Activated CD4-positive, alpha-beta T cell treated with anti-CD3 and anti-CD28 coated beads for 36 hours (primary cell): ENCODE measurements at regions of chr20 and their contacts with region 1.

Region 1: DNA sequence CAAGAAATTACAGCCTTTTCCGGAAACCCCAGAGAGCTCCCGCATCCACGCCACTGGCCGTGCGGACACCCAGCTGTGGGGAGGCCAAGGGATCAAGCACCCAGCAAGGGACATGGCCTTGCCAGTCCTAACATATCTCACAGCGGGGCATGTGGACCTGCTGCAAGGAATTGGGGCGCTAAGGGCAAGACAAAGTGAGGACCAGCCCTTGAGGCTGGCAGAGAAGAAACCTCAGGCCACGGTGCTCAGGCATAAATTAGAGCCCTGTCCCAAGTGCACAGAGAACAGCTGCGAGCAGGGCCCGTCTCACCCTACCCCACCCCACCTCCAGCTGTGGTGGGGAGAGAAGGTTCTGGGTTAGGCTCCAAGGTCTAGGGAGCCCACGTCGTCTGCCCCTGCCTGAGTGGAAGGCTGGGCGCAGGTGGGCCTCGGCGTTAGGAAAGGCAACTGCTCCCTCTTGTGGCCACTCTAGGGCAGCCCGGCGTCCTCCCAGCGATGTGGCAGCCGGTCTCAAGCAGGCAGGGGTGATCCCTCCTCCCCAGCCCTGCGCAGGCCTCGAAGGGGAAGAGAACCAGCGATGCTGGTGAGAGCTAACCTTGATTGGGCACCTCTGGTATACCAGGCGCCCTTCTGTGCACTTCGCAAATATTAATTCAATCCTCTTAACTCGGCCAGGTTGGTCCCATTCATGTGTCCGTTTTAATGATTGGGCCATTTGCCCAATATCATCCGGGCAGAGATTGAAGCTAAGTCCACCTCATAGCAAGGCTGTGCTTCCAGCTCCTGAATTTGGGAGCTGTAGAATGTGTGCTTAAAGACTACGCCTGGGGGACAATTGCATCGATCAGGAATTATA is 235.8 kb downstream of the NFATC2 start:
- DNase-seq: peak; percentile 88
- ATAC-seq: peak; percentile 99
- H3K4me3 Mint-ChIP-seq: no peak overlapping the region
- H3K27ac Mint-ChIP-seq: no peak overlapping the region
- H3K4me1 Mint-ChIP-seq: no peaks in the 10 kb centered on the region
- H3K27me3 Mint-ChIP-seq: peaks cover 10% of the 10 kb centered on the region

Region 2: DNA sequence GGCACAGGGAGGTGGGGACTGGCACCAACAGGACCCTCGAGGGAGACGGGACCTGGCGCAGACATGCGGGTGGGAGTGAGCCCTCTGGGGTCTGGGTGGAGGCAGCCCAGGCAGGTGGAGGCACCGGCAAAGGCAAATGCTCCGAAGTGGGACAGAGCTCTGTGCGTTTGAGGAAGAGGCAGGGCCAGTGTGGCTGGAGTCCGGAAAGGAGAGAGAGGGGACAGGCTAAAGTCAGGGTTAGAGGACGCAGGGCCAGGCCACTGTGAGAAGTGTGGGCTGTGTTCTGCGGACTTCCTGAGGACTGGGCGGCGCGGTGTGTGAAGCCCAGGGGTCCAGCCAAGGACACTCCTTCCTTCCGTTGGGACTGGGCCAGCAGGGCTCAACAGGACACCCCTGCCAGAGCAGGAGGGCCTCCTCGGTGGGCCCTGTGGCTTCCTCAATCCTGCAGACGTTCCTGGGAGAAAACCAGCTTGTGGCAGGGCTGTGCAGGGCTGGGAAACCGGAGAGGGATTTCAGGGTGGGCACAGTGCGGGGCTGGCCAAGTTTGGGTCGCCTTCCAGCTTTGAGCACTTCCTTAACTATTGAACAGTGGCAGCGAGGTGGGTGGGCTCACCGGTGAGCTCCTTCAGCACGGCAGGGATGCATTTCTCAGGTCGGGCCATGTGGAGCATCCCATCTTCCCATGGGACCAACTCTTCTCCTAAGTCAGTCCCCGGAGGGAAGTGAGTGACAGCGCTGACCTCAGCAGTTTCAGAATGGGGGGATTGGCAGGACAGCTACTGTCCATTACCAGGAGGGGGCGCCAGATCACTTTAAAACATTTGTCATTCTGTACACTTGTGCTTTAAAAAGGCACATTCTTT is 325.6 kb before region 1 on chr20:
- CTCF ChIA-PET with region 1: interaction called, 23 read pairs
- POLR2A ChIA-PET with region 1: no interaction called
- intact Hi-C with region 1: no loop called
- DNase-seq: peak; percentile 84
- ATAC-seq: no peak
- H3K4me3 Mint-ChIP-seq: no peak overlapping the region
- H3K27ac Mint-ChIP-seq: peak overlapping the region; percentile 90
- H3K4me1 Mint-ChIP-seq: peaks cover 20% of the 10 kb centered on the region
- H3K27me3 Mint-ChIP-seq: peaks cover 26% of the 10 kb centered on the region

Region 3: GRCh38 chr20:50987592-50988210 is 319.0 kb before region 1 on chr20:
- CTCF ChIA-PET with region 1: interaction called, 210 read pairs
- POLR2A ChIA-PET with region 1: interaction called, 4 read pairs
- intact Hi-C with region 1: loop called (anchors 1 kb)
- DNase-seq: peak; percentile 71
- ATAC-seq: peak; percentile 89
- H3K4me3 Mint-ChIP-seq: no peak overlapping the region
- H3K27ac Mint-ChIP-seq: no peak overlapping the region
- H3K4me1 Mint-ChIP-seq: no peaks in the 10 kb centered on the region
- H3K27me3 Mint-ChIP-seq: peaks cover 23% of the 10 kb centered on the region

Region 4: DNA sequence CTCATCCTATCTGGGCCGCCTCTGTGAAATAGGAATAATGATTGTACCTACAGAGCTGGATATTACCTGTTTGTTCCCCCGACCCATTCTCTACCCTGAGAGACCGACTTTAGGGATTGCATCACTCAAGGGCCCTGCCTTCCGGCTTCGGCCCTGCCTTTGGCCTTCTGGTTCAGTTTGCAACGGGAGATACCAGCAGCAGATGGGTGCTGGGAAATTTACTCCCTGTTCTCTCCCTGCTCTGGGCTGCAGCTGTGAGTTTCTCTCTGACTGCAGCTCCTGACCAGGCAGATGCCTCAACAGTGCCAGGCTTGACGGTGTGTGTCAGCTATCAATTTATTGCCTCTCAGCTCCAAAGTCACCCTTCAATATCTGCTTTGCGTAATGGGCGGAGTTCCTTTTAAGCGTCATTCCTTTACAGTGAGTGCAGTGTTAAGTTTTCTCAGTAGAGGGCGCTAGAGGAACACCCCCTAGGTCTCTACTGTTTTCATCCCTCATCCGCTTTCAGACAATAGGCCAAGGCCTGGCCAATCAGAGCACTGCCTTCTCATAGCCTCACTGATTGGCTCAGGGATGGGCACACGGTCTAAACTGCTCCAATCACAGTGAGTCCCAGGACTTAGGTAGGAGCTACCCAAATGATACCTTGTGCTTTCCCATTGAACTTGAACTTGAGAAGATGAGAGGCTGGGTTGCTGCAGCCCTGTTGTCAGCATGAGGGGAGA is 313.8 kb before region 1 on chr20:
- CTCF ChIA-PET with region 1: interaction called, 210 read pairs
- POLR2A ChIA-PET with region 1: interaction called, 4 read pairs
- intact Hi-C with region 1: loop called (anchors 1 kb)
- DNase-seq: peak; percentile 78
- ATAC-seq: peak; percentile 100
- H3K4me3 Mint-ChIP-seq: no peak overlapping the region
- H3K27ac Mint-ChIP-seq: no peak overlapping the region
- H3K4me1 Mint-ChIP-seq: no peaks in the 10 kb centered on the region
- H3K27me3 Mint-ChIP-seq: peaks cover 4% of the 10 kb centered on the region

Region 5: GRCh38 chr20:51014797-51015722 is 291.7 kb before region 1 on chr20:
- CTCF ChIA-PET with region 1: interaction called, 12 read pairs
- POLR2A ChIA-PET with region 1: no interaction called
- intact Hi-C with region 1: no loop called
- DNase-seq: peak; percentile 64
- ATAC-seq: peak; percentile 49
- H3K4me3 Mint-ChIP-seq: no peak overlapping the region
- H3K27ac Mint-ChIP-seq: no peak overlapping the region
- H3K4me1 Mint-ChIP-seq: peaks cover 3% of the 10 kb centered on the region
- H3K27me3 Mint-ChIP-seq: peaks cover 18% of the 10 kb centered on the region

Region 6: DNA sequence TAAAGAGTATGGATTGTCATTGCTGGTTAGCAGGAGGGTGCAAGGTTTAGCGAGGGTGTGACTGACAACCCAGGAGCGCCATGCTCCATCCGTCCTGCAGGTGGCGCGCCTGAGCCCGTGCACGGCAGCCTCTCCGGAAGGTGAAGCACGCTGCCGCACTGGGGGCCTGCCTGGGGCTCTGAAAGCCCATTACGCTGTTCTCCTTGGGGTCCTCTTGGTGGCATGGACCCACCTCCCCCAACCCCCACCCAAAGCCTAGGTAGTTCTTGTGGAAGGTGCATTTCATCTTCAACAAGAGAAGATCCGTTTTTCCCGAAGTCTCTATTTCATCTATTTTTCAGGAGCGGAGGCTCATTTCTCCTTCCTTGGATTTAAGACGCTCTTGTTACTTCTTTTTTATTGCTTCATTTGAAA is 86.4 kb before region 1 on chr20:
- CTCF ChIA-PET with region 1: interaction called, 21 read pairs
- POLR2A ChIA-PET with region 1: no interaction called
- intact Hi-C with region 1: loop called (anchors 1 kb)
- DNase-seq: peak; percentile 83
- ATAC-seq: peak; percentile 87
- H3K4me3 Mint-ChIP-seq: no peak overlapping the region
- H3K27ac Mint-ChIP-seq: no peak overlapping the region
- H3K4me1 Mint-ChIP-seq: peaks cover 10% of the 10 kb centered on the region
- H3K27me3 Mint-ChIP-seq: peaks cover 58% of the 10 kb centered on the region

Region 7: GRCh38 chr20:51326201-51326819 is 19.6 kb after region 1 on chr20:
- CTCF ChIA-PET with region 1: interaction called, 14 read pairs
- POLR2A ChIA-PET with region 1: no interaction called
- intact Hi-C with region 1: no loop called
- DNase-seq: peak; percentile 78
- ATAC-seq: peak; percentile 36
- H3K4me3 Mint-ChIP-seq: no peak overlapping the region
- H3K27ac Mint-ChIP-seq: no peak overlapping the region
- H3K4me1 Mint-ChIP-seq: no peaks in the 10 kb centered on the region
- H3K27me3 Mint-ChIP-seq: peaks cover 2% of the 10 kb centered on the region

Region 8: GRCh38 chr20:51428401-51429143 is 121.8 kb after region 1 on chr20:
- CTCF ChIA-PET with region 1: no interaction called
- POLR2A ChIA-PET with region 1: no interaction called
- intact Hi-C with region 1: no loop called
- DNase-seq: no peak
- ATAC-seq: no peak
- H3K4me3 Mint-ChIP-seq: no peak overlapping the region
- H3K27ac Mint-ChIP-seq: no peak overlapping the region
- H3K4me1 Mint-ChIP-seq: peaks cover 74% of the 10 kb centered on the region
- H3K27me3 Mint-ChIP-seq: no peaks in the 10 kb centered on the region

Region 9: DNA sequence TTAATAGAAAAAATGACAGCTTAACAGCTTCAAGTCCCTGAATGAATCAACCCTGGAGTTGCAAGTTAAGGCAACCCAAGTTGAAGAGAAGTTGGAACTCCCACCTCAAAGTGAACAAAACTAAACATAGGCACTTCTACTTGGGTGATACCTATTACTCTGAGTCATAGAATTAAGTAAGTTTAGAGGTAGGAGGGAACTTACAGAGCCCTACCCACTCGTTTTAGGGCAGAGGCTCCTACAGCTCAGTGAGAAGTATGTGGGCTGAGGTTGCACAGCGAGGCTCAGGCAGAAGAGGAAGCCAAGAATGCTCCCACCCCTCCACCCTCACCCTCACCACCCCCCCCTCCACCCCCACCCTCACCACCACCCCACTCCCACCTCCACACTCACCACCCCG is 193.6 kb after region 1 on chr20:
- CTCF ChIA-PET with region 1: no interaction called
- POLR2A ChIA-PET with region 1: no interaction called
- intact Hi-C with region 1: no loop called
- DNase-seq: peak; percentile 74
- ATAC-seq: peak; percentile 72
- H3K4me3 Mint-ChIP-seq: no peak overlapping the region
- H3K27ac Mint-ChIP-seq: peak overlapping the region; percentile 91
- H3K4me1 Mint-ChIP-seq: peaks cover 82% of the 10 kb centered on the region
- H3K27me3 Mint-ChIP-seq: no peaks in the 10 kb centered on the region